ENCODE measurements at regions of chr10 and their contacts with region 1.

Region 1: GRCh38 chr10:76303682-76304316 is 872.4 kb downstream of the LRMDA start:
- DNase-seq: peak; percentile 84 to 85
- H3K4me3 ChIP-seq: no peak overlapping the region
- H3K4me3 Mint-ChIP-seq: peak overlapping the region; percentile 26
- H3K27ac Mint-ChIP-seq: peak overlapping the region; percentile 86
- H3K4me1 ChIP-seq: peaks cover 62% of the 10 kb centered on the region
- H3K4me1 Mint-ChIP-seq: peaks cover 52% of the 10 kb centered on the region
- H3K27me3 ChIP-seq: no peaks in the 10 kb centered on the region
- H3K27me3 Mint-ChIP-seq: no peaks in the 10 kb centered on the region
- CTCF ChIP-seq: peak; percentile 56 to 72

Region 2: DNA sequence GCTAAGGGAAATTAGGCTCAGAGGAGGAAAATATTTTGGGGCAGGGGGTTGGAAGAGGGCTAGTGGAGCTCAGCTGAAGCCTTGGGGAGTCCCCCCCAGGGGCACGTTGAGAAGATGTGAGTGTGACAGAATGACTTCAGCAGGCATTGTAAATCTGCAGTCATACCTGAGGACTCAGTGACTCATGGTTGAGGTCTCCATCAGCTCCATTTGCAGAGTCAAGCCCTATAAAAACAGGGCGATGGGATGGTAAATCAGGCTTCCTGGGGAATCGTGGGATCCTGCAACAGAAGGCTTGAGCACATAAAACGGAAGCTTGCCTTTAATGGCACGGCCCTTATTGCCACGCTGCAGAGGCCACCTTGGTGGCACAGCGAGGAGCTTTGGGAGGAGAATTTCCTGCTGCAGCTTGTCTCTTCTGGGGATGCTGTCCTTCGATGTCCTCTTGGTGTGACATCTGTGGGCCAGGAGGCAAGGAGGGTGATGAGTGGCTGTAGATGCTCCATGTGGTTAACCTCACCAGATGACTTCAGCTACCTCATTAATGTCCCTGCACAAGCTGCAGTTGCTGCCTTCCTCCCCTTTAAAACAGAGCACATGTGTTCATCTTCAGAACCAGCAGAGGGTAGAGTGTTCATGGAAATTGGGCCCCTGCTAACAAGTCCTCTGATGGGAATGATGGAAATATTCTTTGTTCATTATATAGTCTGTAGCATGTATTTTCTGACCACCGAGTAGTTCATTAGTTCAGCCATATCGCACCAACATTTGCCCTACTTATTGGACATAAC is 586.5 kb before region 1 on chr10:
- CTCF ChIA-PET with region 1: interaction called, 3 read pairs
- POLR2A ChIA-PET with region 1: no interaction called
- intact Hi-C with region 1: loop called (anchors 10 kb)
- DNase-seq: peak in 1 of 2 experiments; percentile 12
- H3K4me3 ChIP-seq: no peak overlapping the region
- H3K4me3 Mint-ChIP-seq: no peak overlapping the region
- H3K27ac Mint-ChIP-seq: no peak overlapping the region
- H3K4me1 ChIP-seq: no peaks in the 10 kb centered on the region
- H3K4me1 Mint-ChIP-seq: no peaks in the 10 kb centered on the region
- H3K27me3 ChIP-seq: no peaks in the 10 kb centered on the region
- H3K27me3 Mint-ChIP-seq: no peaks in the 10 kb centered on the region
- CTCF ChIP-seq: peak; percentile 15 to 41

Region 3: DNA sequence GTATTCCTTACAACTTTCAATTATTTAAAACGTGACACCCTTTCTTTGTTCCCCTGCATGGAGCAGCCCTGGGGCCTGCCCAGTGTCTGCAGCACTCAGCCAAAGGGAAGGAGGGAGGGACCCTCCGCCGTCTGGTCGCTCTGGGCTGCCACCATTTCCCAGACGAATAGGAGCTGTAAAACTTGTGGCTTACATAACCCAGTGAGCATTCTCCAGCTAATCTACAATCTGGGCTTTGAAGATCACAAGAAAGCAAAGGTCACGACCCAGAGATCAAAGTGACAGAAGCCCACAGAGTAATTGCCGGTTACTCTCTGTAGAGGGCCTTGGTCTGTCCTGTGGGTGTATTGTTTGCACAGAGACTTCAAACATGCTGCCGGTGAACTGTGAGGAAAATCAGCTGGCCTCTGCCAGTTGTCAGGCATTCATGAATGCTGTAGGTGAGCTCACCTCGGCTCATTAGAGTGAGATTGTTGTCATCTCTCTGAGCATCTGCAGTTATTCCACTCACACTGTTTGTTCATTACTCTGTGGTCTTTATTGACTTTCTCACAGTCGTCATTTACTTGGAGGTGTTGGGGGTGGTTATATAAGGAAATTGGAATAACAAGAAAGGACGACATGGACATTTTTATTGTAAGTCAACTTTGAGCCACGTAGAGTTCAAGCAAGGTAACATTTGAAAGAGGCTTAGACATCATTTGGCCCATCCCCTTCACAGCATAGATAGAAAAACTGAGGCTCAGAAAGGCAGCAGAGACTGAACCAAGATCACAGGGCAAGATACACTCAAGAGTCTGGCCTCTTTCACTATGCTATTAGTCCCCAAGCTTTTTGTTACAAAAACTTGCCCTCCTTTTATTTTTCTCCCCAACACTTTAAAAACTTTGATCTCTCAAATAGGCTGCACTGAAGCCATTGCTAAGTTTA is 252.5 kb before region 1 on chr10:
- CTCF ChIA-PET with region 1: interaction called, 23 read pairs
- POLR2A ChIA-PET with region 1: interaction called, 3 read pairs
- intact Hi-C with region 1: loop called (anchors 1 kb)
- DNase-seq: peak; percentile 95 to 97
- H3K4me3 ChIP-seq: no peak overlapping the region
- H3K4me3 Mint-ChIP-seq: peak overlapping the region; percentile 56
- H3K27ac Mint-ChIP-seq: peak overlapping the region; percentile 93
- H3K4me1 ChIP-seq: peaks cover 39% of the 10 kb centered on the region
- H3K4me1 Mint-ChIP-seq: peaks cover 36% of the 10 kb centered on the region
- H3K27me3 ChIP-seq: no peaks in the 10 kb centered on the region
- H3K27me3 Mint-ChIP-seq: no peaks in the 10 kb centered on the region
- CTCF ChIP-seq: peak in 1 of 2 experiments; percentile 17

Region 4: DNA sequence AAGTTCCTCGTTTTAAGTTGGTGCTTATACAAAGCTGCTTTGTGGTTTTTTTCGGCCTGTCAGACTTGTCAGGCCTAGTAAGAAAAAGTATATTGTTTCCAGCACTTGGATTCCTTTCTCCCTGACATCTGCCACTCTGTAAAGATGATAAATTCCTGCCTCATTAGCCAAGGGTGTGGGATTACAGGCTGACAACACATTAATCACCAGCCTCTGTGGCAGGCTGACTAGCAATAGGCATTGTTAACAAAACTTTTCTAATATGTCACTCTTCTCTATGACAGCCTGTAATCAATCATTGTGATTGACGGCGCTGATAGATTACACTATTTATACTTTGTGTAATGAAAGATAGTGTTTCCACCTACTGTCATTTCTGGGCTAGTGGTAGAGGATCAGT is 189.8 kb before region 1 on chr10:
- CTCF ChIA-PET with region 1: interaction called, 7 read pairs
- POLR2A ChIA-PET with region 1: interaction called, 4 read pairs
- intact Hi-C with region 1: loop called (anchors 1 kb)
- DNase-seq: peak; percentile 66 to 73
- H3K4me3 ChIP-seq: no peak overlapping the region
- H3K4me3 Mint-ChIP-seq: peak overlapping the region; percentile 47
- H3K27ac Mint-ChIP-seq: peak overlapping the region; percentile 66
- H3K4me1 ChIP-seq: peaks cover 35% of the 10 kb centered on the region
- H3K4me1 Mint-ChIP-seq: peaks cover 44% of the 10 kb centered on the region
- H3K27me3 ChIP-seq: no peaks in the 10 kb centered on the region
- H3K27me3 Mint-ChIP-seq: no peaks in the 10 kb centered on the region
- CTCF ChIP-seq: no peak

Region 5: GRCh38 chr10:76185471-76186301 is 118.1 kb before region 1 on chr10:
- CTCF ChIA-PET with region 1: interaction called, 14 read pairs
- POLR2A ChIA-PET with region 1: interaction called, 11 read pairs
- intact Hi-C with region 1: no loop called
- DNase-seq: no peak
- H3K4me3 ChIP-seq: no peak overlapping the region
- H3K4me3 Mint-ChIP-seq: no peak overlapping the region
- H3K27ac Mint-ChIP-seq: peak overlapping the region; percentile 42
- H3K4me1 ChIP-seq: peaks cover 56% of the 10 kb centered on the region
- H3K4me1 Mint-ChIP-seq: peaks cover 31% of the 10 kb centered on the region
- H3K27me3 ChIP-seq: no peaks in the 10 kb centered on the region
- H3K27me3 Mint-ChIP-seq: no peaks in the 10 kb centered on the region
- CTCF ChIP-seq: no peak

Region 6: GRCh38 chr10:76236356-76236755 is 67.4 kb before region 1 on chr10:
- CTCF ChIA-PET with region 1: no interaction called
- POLR2A ChIA-PET with region 1: no interaction called
- intact Hi-C with region 1: loop called (anchors 2 kb)
- DNase-seq: no peak
- H3K4me3 ChIP-seq: no peak overlapping the region
- H3K4me3 Mint-ChIP-seq: no peak overlapping the region
- H3K27ac Mint-ChIP-seq: no peak overlapping the region
- H3K4me1 ChIP-seq: peaks cover 21% of the 10 kb centered on the region
- H3K4me1 Mint-ChIP-seq: peaks cover 19% of the 10 kb centered on the region
- H3K27me3 ChIP-seq: no peaks in the 10 kb centered on the region
- H3K27me3 Mint-ChIP-seq: no peaks in the 10 kb centered on the region
- CTCF ChIP-seq: no peak

Region 7: GRCh38 chr10:76382381-76382851 is 78.6 kb after region 1 on chr10:
- CTCF ChIA-PET with region 1: no interaction called
- POLR2A ChIA-PET with region 1: no interaction called
- intact Hi-C with region 1: no loop called
- DNase-seq: no peak
- H3K4me3 ChIP-seq: no peak overlapping the region
- H3K4me3 Mint-ChIP-seq: no peak overlapping the region
- H3K27ac Mint-ChIP-seq: no peak overlapping the region
- H3K4me1 ChIP-seq: no peaks in the 10 kb centered on the region
- H3K4me1 Mint-ChIP-seq: no peaks in the 10 kb centered on the region
- H3K27me3 ChIP-seq: no peaks in the 10 kb centered on the region
- H3K27me3 Mint-ChIP-seq: no peaks in the 10 kb centered on the region
- CTCF ChIP-seq: no peak

Measured in Caco-2 (cell line).